Lower leg skin (tissue), 4 donors: ENCODE measurements at regions of chr3 and their contacts with region 1.

Region 1: GRCh38 chr3:120558771-120559241 is 37.3 kb upstream of the NDUFB4 start:
- DNase-seq: peak; percentile 84 to 97
- H3K4me3 ChIP-seq: no peak overlapping the region
- CTCF ChIP-seq: peak in 1 of 3 donors; percentile 90
- POLR2A ChIP-seq: no peak

Region 2: DNA sequence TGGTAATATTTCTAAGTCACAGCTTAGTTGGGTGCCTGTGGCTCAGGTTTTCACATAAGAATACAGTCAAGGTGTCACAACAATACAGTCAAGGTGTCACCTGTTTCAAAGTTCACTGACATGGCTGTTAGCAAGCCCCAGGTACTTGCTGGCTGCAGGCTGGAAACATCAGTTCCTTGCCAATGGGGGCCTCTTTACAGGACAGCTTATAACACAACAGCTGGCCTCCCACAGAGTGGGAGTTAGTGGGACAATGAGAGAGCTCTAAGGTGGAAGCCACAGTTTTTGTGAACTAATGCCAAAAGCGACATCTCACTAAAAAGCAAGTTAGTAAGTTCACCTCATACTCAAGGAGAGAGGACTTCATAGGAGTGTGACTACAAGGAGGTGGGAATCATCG is 319.2 kb before region 1 on chr3:
- intact Hi-C with region 1: loop called (anchors 5 kb)
- DNase-seq: no peak
- H3K4me3 ChIP-seq: no peak overlapping the region
- CTCF ChIP-seq: no peak
- POLR2A ChIP-seq: no peak

Region 3: DNA sequence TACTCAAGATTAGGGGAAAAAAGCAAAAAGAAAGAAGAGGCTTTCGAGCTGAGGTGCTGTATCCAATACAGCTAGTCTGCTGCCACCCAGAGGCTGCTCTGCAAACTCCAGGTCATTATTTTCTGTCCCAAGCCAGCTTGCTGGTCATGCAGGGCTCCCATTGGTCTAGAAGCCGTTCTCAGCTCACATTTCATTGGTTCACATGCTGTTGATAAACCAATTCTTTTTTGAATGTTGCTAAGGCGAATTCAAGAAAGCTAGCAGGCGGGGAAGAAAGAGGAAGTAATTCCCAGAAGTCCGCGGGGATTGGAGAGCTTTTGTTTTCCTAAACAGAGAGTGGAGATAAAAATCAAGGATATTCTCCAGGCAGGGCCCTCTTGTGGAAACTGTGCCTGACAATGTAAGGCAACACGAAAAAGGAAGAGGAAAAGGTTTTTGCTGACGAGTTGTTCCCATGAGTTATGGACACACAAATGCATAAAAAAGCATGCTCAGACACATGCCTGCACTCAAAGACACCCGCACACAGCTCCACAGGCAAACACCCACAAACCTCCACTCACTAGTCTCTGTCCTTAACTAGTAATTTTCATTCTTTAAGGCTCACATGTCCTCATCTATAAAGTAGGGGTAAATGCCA is 141.4 kb before region 1 on chr3:
- intact Hi-C with region 1: loop called (anchors 5 kb)
- DNase-seq: peak; percentile 94 to 97
- H3K4me3 ChIP-seq: no peak overlapping the region
- CTCF ChIP-seq: peak in 1 of 3 donors; percentile 71
- POLR2A ChIP-seq: no peak

Region 4: DNA sequence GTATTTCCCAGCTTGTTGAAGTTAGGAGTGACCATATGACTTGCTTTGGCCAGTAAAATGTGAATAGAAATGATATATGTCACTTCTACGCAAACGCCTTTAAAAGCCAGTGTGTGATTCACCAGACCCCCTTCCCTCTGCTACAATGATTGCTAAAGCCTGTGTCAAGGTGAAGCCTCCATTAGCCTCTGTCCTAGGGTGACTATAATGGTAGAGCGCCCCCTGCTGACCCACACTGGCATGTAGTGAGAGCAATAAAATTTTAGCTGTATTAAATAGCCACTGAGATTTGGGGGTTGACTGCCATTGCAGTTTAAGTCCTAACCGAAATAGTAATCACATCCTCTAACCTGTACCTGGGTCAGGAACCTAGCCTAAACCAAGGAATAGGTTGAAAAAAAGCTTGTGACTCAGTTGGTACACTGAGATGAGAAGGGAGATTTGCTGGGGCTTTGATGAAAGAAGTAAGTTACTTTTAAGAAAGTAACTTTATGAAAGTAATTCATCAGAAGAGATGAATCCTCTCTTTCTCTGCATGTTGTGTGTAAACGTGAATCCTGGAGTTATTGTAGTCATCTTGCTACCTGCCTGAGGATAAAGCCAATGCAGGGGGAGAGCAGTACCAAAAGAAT is 236.3 kb after region 1 on chr3:
- intact Hi-C with region 1: loop called (anchors 10 kb)
- DNase-seq: peak; percentile 65 to 91
- H3K4me3 ChIP-seq: no peak overlapping the region
- CTCF ChIP-seq: peak in 1 of 3 donors; percentile 68
- POLR2A ChIP-seq: no peak